ENCODE measurements at regions of chr17 and their contacts with region 1.

Region 1: DNA sequence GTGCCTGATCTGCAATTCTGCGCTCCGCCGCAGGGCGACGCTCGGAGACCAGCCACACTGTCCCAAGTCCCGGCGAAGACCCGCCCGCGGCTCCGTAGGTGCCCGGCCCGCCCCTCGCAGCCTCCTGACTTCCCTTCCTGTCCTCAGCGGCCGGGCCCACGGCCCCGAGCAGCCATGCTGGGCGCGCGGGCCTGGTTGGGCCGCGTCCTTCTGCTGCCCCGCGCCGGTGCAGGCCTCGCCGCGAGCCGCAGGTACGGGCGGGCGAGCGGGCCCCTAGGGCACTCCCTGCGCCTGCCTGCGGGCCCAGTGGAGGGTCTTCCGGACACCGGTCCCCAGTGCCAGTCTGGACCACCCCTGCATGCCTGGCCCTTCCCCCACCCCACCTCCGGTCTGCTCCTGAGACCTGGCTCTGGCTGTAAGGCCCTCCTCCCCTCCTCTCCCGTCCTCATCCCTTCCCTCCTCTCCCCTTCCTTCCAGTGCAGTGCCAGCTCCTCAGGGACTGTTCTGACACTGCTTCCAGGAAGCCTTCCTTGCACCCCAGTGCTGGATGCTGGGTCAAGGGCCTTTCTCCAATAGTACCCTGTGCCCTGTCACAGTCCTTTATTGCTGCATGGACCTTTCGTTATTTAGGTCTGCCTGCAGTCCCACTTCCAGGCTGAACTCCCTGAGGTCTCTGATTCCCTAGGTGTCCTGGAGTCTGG is at the start of gene SPATA20:
- DNase-seq: peak; percentile 82 to 90 (median 83)
- H3K4me3 ChIP-seq: peak within 1 kb of the TSS; percentile 68
- H3K4me3 Mint-ChIP-seq: peak within 1 kb of the TSS; percentile 61 to 91 (median 79)
- H3K27ac ChIP-seq: peak within 1 kb of the TSS; percentile 54
- H3K27ac Mint-ChIP-seq: peak within 1 kb of the TSS in 6 of 8 donors; percentile 50 to 87 (median 64)
- H3K4me1 ChIP-seq: peaks cover 23% of the 10 kb centered on the region
- H3K4me1 Mint-ChIP-seq: peaks cover 11 to 21% (median 13%) of the 10 kb centered on the region in 3 donors
- H3K27me3 ChIP-seq: peaks cover 7% of the 10 kb centered on the region
- H3K27me3 Mint-ChIP-seq: peaks cover 0 to 4% of the 10 kb centered on the region in 2 donors
- total RNA-seq, gene SPATA20: 34.7 to 42.9 TPM

Region 2: GRCh38 chr17:50626037-50626574 is 78.9 kb after region 1 on chr17:
- CTCF ChIA-PET with region 1: interaction called, 14 read pairs
- POLR2A ChIA-PET with region 1: interaction called, 3 read pairs
- DNase-seq: peak; percentile 39 to 72 (median 46)
- H3K4me3 ChIP-seq: no peak overlapping the region
- H3K4me3 Mint-ChIP-seq: no peak overlapping the region
- H3K27ac ChIP-seq: no peak overlapping the region
- H3K27ac Mint-ChIP-seq: no peak overlapping the region
- H3K4me1 ChIP-seq: no peaks in the 10 kb centered on the region
- H3K4me1 Mint-ChIP-seq: peaks cover 0 to 5% (median 2%) of the 10 kb centered on the region in 3 donors
- H3K27me3 ChIP-seq: peaks cover 17% of the 10 kb centered on the region
- H3K27me3 Mint-ChIP-seq: peaks cover 35 to 60% of the 10 kb centered on the region in 2 donors